Esophagus muscularis mucosa (tissue), 4 donors: ENCODE measurements at regions of chrX and their contacts with region 1.

Region 1: GRCh38 chrX:24498975-24499374 is 33.9 kb downstream of the PDK3 start:
- DNase-seq: no peak
- H3K4me3 ChIP-seq: no peak overlapping the region
- H3K27ac ChIP-seq: peak overlapping the region in 3 of 4 donors; percentile 47 to 65 (median 58)
- H3K4me1 ChIP-seq: peaks cover 3 to 25% (median 22%) of the 10 kb centered on the region in 4 donors
- H3K27me3 ChIP-seq: no peaks in the 10 kb centered on the region
- CTCF ChIP-seq: peak; percentile 60 to 64 (median 62)
- EP300 ChIP-seq: no peak
- POLR2A ChIP-seq: no peak

Region 2: GRCh38 chrX:24395775-24396174 is 103.2 kb before region 1 on chrX:
- intact Hi-C with region 1: loop called (anchors 2 kb)
- DNase-seq: no peak
- H3K4me3 ChIP-seq: no peak overlapping the region
- H3K27ac ChIP-seq: peak overlapping the region; percentile 65 to 80 (median 70)
- H3K4me1 ChIP-seq: peaks cover 0 to 20% (median 17%) of the 10 kb centered on the region in 4 donors
- H3K27me3 ChIP-seq: no peaks in the 10 kb centered on the region
- CTCF ChIP-seq: peak; percentile 68 to 86 (median 74)
- EP300 ChIP-seq: no peak
- POLR2A ChIP-seq: no peak

Region 3: DNA sequence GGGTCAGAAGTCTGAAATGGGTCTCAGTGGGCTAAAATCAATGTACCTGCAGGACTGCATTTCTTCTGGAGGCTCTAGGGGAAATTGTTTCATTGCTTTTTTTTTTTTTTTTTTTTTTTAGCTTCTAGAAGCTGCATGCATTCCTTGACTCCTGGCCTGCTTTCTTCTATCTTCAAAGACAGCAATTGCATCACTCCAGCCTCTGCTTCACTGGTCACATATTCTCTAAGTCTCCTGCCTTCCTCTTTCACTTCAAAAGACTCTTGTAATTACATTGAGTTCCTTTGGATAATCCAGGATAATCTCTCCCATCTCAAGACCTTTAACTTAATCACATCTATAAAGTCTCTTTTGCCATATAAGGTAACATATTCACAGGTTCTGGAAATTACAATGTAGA is 159.4 kb after region 1 on chrX:
- intact Hi-C with region 1: no loop called
- DNase-seq: no peak
- H3K4me3 ChIP-seq: no peak overlapping the region
- H3K27ac ChIP-seq: no peak overlapping the region
- H3K4me1 ChIP-seq: no peaks in the 10 kb centered on the region
- H3K27me3 ChIP-seq: no peaks in the 10 kb centered on the region
- CTCF ChIP-seq: no peak
- EP300 ChIP-seq: no peak
- POLR2A ChIP-seq: no peak